ENCODE measurements at regions of chr3 and their contacts with region 1.

Region 1: DNA sequence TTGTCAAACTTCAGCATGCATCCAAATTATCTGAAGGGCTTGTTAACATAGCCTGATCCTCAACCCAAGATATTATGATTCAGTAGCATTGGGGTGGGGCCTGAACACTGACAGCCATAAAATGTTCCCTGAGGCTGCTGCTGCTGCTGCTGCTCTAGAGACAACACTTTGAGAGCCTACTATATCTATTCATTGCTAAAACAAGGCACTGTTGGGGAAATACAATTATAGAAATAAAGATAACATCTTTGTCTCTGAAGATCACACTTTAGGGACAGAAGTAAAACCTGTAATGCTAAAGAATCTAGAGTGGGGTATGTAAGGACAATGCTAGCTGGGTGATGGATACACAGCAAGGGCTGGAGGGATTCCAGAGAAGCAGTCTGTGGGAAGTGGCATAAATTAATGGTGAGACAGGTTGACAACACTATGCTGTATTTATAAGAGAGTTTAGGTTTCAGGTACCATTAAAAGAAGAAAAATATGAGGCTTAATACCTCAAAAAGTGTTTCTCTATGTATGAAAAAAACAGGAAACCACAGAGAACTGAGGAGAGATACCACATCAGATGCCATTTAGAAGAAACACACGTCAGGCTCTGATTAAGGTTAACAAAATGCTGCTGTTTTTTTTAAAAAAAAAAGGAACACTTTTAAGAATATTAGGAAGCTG is 115.9 kb downstream of the CBLB start:
- DNase-seq: peak; percentile 13 to 89 (median 55)
- ATAC-seq: peak; percentile 79
- H3K4me3 ChIP-seq: peak overlapping the region; percentile 10 to 21
- H3K4me3 Mint-ChIP-seq: peak overlapping the region; percentile 56
- H3K27ac ChIP-seq: peak overlapping the region; percentile 70 to 85
- H3K27ac Mint-ChIP-seq: peak overlapping the region; percentile 98
- H3K4me1 ChIP-seq: peaks cover 84% of the 10 kb centered on the region
- H3K4me1 Mint-ChIP-seq: peaks cover 80% of the 10 kb centered on the region
- H3K27me3 ChIP-seq: no peaks in the 10 kb centered on the region
- H3K27me3 Mint-ChIP-seq: no peaks in the 10 kb centered on the region
- CTCF ChIP-seq: no peak

Region 2: DNA sequence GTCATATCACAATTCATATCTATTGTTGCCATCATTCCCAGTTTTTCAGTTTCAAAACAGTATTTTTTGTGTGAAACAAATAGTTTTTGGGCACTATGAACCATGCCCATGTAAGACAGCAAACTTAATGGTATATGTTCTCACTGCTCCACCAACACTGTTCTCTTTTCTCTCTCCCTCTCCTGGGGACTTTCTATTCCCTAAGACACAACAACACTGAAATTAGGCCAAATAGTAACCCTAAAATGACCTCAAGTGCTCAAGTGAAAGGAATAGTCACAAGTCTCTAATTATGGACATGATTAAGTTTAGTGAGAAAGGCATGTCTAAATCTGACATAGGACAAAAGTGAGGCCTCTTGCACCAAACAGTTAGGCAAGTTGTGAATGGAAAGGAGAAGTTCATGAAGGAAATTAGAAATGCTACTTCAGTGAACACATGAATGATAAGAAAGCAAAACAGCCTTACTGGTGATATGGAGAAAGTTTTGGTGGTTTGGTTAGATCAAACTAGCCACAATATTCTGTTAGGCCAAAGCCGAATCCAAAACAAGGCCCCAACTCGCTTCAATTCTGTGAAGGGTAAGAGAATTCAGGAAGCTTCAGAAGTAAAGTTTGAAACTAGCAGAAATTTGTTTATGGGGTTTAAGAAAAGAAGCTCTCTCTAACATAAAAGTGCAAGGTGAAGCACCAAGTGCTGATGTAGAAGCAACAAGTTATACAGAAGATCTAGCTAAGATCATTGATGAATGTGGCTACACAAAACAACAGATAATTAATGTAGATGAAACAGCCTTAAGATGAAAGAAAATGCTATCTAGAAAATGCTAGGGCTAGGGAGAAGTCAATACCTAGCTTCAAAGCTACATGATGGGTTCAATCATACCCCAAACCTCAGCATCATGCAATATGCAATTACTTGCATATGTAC is 11.8 kb after region 1 on chr3:
- CTCF ChIA-PET with region 1: no interaction called
- POLR2A ChIA-PET with region 1: interaction called, 5 read pairs
- intact Hi-C with region 1: loop called in 1 of 2 experiments (anchors 1 kb)
- DNase-seq: peak in 2 of 9 experiments; percentile 44 to 63
- ATAC-seq: peak; percentile 52
- H3K4me3 ChIP-seq: no peak overlapping the region
- H3K4me3 Mint-ChIP-seq: peak overlapping the region; percentile 8
- H3K27ac ChIP-seq: peak overlapping the region in 1 of 2 experiments; percentile 67
- H3K27ac Mint-ChIP-seq: peak overlapping the region; percentile 83
- H3K4me1 ChIP-seq: peaks cover 50% of the 10 kb centered on the region
- H3K4me1 Mint-ChIP-seq: peaks cover 79% of the 10 kb centered on the region
- H3K27me3 ChIP-seq: no peaks in the 10 kb centered on the region
- H3K27me3 Mint-ChIP-seq: no peaks in the 10 kb centered on the region
- CTCF ChIP-seq: no peak

Region 3: DNA sequence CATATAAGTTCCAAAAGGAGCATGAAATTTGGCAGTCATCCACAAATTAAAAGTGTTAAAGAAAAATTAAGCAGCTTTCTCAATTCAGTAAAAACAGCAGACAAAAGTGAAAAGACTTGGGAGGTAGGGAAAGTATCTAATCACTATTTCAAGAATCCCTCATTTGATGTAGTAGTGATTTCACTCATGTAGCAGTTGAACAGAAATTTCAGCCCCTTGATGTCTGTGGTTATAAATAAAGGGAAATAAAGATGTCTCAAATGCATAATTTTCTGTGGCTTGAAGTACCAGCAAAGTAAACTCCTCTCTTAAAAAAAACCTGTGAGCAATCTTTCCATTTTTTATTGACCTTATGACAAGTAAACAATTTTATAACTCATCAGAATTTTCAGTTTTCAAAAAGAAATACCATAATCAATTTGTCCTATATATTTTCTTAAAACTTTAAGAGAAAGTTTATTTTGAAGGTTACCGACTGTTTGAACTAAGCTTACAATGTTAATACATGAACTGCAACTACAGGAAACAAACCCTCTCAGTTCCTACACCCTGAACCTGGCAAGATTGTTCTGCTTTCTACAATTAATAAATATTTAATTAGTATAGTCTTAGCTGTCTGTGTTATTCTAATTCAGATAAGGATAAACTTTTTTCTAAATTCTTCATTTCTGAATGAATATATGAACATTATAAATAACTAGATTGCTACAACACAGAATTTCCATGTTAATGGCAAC is 21.7 kb after region 1 on chr3:
- CTCF ChIA-PET with region 1: no interaction called
- POLR2A ChIA-PET with region 1: no interaction called
- intact Hi-C with region 1: loop called (anchors 2 kb)
- DNase-seq: no peak
- ATAC-seq: no peak
- H3K4me3 ChIP-seq: no peak overlapping the region
- H3K4me3 Mint-ChIP-seq: no peak overlapping the region
- H3K27ac ChIP-seq: peak overlapping the region in 1 of 2 experiments; percentile 22
- H3K27ac Mint-ChIP-seq: peak overlapping the region; percentile 70
- H3K4me1 ChIP-seq: peaks cover 41% of the 10 kb centered on the region
- H3K4me1 Mint-ChIP-seq: peaks cover 83% of the 10 kb centered on the region
- H3K27me3 ChIP-seq: no peaks in the 10 kb centered on the region
- H3K27me3 Mint-ChIP-seq: no peaks in the 10 kb centered on the region
- CTCF ChIP-seq: no peak

Region 4: GRCh38 chr3:105785803-105786202 is 32.9 kb after region 1 on chr3:
- CTCF ChIA-PET with region 1: no interaction called
- POLR2A ChIA-PET with region 1: no interaction called
- intact Hi-C with region 1: loop called in 1 of 2 experiments (anchors 5 kb)
- DNase-seq: peak in 1 of 9 experiments; percentile 58
- ATAC-seq: peak; percentile 29
- H3K4me3 ChIP-seq: peak overlapping the region in 1 of 2 experiments; percentile 26
- H3K4me3 Mint-ChIP-seq: no peak overlapping the region
- H3K27ac ChIP-seq: peak overlapping the region in 1 of 2 experiments; percentile 44
- H3K27ac Mint-ChIP-seq: peak overlapping the region; percentile 7
- H3K4me1 ChIP-seq: peaks cover 47% of the 10 kb centered on the region
- H3K4me1 Mint-ChIP-seq: peaks cover 68% of the 10 kb centered on the region
- H3K27me3 ChIP-seq: no peaks in the 10 kb centered on the region
- H3K27me3 Mint-ChIP-seq: no peaks in the 10 kb centered on the region
- CTCF ChIP-seq: no peak

Region 5: GRCh38 chr3:105806361-105806760 is 53.5 kb after region 1 on chr3:
- CTCF ChIA-PET with region 1: no interaction called
- POLR2A ChIA-PET with region 1: interaction called, 3 read pairs
- intact Hi-C with region 1: loop called in 1 of 2 experiments (anchors 2 kb)
- DNase-seq: peak in 4 of 9 experiments; percentile 25 to 83 (median 58)
- ATAC-seq: peak; percentile 90
- H3K4me3 ChIP-seq: no peak overlapping the region
- H3K4me3 Mint-ChIP-seq: no peak overlapping the region
- H3K27ac ChIP-seq: peak overlapping the region in 1 of 2 experiments; percentile 2
- H3K27ac Mint-ChIP-seq: peak overlapping the region; percentile 60
- H3K4me1 ChIP-seq: peaks cover 23% of the 10 kb centered on the region
- H3K4me1 Mint-ChIP-seq: peaks cover 73% of the 10 kb centered on the region
- H3K27me3 ChIP-seq: no peaks in the 10 kb centered on the region
- H3K27me3 Mint-ChIP-seq: no peaks in the 10 kb centered on the region
- CTCF ChIP-seq: no peak

Region 6: DNA sequence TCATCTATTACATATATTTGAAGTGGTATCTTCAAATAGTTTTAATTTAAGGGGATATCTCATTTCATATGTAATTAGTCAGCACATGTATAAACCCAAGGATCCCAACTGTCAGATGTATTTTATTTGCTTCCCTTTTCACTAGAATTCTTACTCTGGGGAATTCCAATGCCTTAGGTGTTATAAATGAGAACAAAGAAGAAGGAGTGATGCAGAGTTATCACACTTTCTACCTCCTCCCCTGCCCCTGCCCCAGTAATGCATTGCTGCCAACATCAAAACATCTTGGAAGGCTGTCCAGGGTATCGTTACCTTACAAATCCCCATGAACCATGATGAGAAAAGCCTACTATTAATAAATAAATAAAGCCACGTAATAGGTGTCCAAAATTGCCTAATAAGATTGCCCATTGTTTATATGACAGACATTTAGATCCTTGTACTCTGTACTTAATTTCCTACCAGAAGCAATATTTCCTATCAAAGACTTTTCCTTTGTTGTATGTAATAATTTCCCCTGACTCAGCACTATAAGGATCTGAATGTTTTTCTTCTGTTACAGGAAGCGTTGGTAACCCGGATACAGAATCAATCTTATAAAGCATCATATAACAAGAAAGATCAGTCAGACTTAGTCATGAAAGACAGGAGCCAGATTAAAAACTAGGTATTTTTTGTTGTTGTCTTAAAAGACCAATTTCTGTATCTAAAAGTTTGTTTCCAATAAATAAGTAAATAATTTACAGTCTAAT is 77.2 kb after region 1 on chr3:
- CTCF ChIA-PET with region 1: no interaction called
- POLR2A ChIA-PET with region 1: no interaction called
- intact Hi-C with region 1: loop called in 1 of 2 experiments (anchors 2 kb)
- DNase-seq: peak in 2 of 9 experiments; percentile 50 to 71
- ATAC-seq: peak; percentile 77
- H3K4me3 ChIP-seq: no peak overlapping the region
- H3K4me3 Mint-ChIP-seq: peak overlapping the region; percentile 6
- H3K27ac ChIP-seq: peak overlapping the region; percentile 35 to 60
- H3K27ac Mint-ChIP-seq: peak overlapping the region; percentile 78
- H3K4me1 ChIP-seq: peaks cover 60% of the 10 kb centered on the region
- H3K4me1 Mint-ChIP-seq: peaks cover 80% of the 10 kb centered on the region
- H3K27me3 ChIP-seq: no peaks in the 10 kb centered on the region
- H3K27me3 Mint-ChIP-seq: no peaks in the 10 kb centered on the region
- CTCF ChIP-seq: no peak

Region 7: DNA sequence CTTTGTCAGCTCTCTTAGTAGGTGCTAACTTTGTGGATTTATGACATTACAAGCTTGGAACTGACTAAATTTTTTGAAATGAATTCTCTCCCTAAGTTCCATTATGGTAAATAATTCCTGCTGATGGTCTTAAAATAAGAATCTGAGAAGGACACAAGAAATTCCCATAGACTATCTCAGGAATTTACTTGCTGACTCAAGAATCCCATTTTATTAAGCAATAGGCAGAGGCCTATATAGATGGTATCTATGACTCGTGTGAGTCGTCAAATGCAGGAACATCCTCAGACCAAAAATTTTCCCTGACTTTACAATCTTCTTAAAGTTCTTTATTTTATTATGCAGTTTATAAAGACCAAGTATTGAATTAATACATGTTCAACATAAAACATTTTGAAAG is 146.6 kb after region 1 on chr3:
- CTCF ChIA-PET with region 1: no interaction called
- POLR2A ChIA-PET with region 1: no interaction called
- intact Hi-C with region 1: no loop called
- DNase-seq: no peak
- ATAC-seq: no peak
- H3K4me3 ChIP-seq: no peak overlapping the region
- H3K4me3 Mint-ChIP-seq: no peak overlapping the region
- H3K27ac ChIP-seq: no peak overlapping the region
- H3K27ac Mint-ChIP-seq: no peak overlapping the region
- H3K4me1 ChIP-seq: no peaks in the 10 kb centered on the region
- H3K4me1 Mint-ChIP-seq: no peaks in the 10 kb centered on the region
- H3K27me3 ChIP-seq: no peaks in the 10 kb centered on the region
- H3K27me3 Mint-ChIP-seq: no peaks in the 10 kb centered on the region
- CTCF ChIP-seq: no peak

Region 8: GRCh38 chr3:106176734-106177133 is 423.9 kb after region 1 on chr3:
- CTCF ChIA-PET with region 1: no interaction called
- POLR2A ChIA-PET with region 1: no interaction called
- intact Hi-C with region 1: loop called (anchors 2 to 10 kb)
- DNase-seq: peak; percentile 8 to 86 (median 52)
- ATAC-seq: peak; percentile 95
- H3K4me3 ChIP-seq: peak overlapping the region; percentile 24 to 25
- H3K4me3 Mint-ChIP-seq: peak overlapping the region; percentile 47
- H3K27ac ChIP-seq: peak overlapping the region; percentile 25 to 66
- H3K27ac Mint-ChIP-seq: peak overlapping the region; percentile 75
- H3K4me1 ChIP-seq: peaks cover 50% of the 10 kb centered on the region
- H3K4me1 Mint-ChIP-seq: peaks cover 57% of the 10 kb centered on the region
- H3K27me3 ChIP-seq: no peaks in the 10 kb centered on the region
- H3K27me3 Mint-ChIP-seq: no peaks in the 10 kb centered on the region
- CTCF ChIP-seq: no peak

Measured in CD8-positive, alpha-beta T cell (primary cell).